Activated naive CD4-positive, alpha-beta T cell treated with anti-CD3 and anti-CD28 coated beads for 36 hours (primary cell): ENCODE measurements at regions of chr1 and their contacts with region 1.

Region 1: DNA sequence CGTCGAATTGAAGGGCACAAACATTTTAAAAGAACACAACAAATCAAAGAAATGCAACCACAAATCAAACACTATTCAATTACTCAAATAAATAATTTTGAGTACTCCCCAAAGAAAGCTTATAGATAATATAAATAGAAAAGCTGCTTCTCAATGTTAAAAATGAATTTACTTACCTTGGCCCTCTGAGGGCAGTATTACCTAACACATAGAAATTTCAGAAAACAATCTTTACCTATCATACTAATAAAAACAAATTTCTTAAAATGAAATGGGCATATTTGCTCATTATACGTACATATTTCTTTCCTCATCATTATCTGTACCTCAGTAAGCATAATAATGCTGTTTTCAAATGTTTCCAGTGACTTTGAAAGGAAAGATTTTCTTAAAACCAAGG is 141.8 kb downstream of the AKT3 start:
- DNase-seq: no peak
- H3K4me3 Mint-ChIP-seq: no peak overlapping the region
- H3K27ac Mint-ChIP-seq: no peak overlapping the region
- H3K4me1 Mint-ChIP-seq: peaks cover 9% of the 10 kb centered on the region
- H3K27me3 Mint-ChIP-seq: no peaks in the 10 kb centered on the region

Region 2: DNA sequence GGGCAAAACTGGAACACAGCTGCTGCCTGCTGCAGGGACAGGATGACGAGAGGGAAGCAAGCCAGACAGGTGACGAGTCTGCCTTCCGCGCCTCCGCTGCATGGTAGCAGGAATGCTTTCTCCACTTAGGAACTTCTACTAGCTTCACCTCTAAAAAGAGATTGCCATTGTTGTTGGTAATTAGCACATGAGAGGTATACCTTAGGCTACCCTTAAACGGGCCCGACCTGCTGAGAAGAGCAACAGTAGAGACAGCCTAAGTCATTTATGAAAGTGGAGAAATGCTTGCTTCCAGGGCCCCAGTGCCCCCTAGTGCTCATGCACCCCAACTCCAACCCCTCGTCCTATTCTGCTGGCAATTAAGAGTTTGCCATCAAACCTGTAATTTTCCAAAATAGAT is 238.7 kb after region 1 on chr1:
- CTCF ChIA-PET with region 1: no interaction called
- intact Hi-C with region 1: loop called (anchors 1 kb)
- DNase-seq: peak; percentile 59
- H3K4me3 Mint-ChIP-seq: no peak overlapping the region
- H3K27ac Mint-ChIP-seq: no peak overlapping the region
- H3K4me1 Mint-ChIP-seq: no peaks in the 10 kb centered on the region
- H3K27me3 Mint-ChIP-seq: no peaks in the 10 kb centered on the region